GM10248 (cell line): ENCODE measurements at regions of chr14 and their contacts with region 1.

Region 1: DNA sequence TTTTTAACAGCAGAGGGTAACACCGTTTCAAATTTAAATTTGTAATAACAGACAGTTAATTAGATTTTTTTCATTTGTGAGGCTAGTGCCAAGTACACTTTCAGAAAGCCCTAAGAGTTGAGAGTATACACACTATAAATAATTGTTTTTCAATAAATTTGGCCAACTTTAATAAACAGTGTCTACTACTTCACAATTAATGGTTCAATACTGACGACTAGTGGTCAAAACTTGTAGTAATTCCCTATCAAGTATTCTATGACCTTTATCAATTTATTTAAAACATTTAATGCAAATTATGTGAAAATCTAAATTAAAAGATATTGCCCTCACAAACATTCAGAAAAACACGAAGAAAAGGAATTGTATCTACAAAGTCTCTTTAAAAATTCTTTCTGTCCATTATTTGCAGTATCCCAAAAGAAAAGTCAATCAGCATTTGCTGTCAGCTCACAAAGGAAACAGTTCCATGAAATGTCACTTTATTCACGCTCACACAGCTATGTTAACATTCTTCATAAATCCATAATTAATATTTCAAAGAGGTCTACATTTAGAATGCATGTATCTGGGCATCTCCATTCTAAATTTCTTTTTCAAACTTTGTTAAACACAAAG is 91.2 kb downstream of the CEP128 start:
- DNase-seq: peak; percentile 7
- CTCF ChIP-seq: peak; percentile 48

Region 2: GRCh38 chr14:78959674-78960264 is 1890.5 kb before region 1 on chr14:
- CTCF ChIA-PET with region 1: interaction called, 15 read pairs
- POLR2A ChIA-PET with region 1: no interaction called
- DNase-seq: peak; percentile 53
- CTCF ChIP-seq: peak; percentile 89

Region 3: GRCh38 chr14:78967110-78967809 is 1883.0 kb before region 1 on chr14:
- CTCF ChIA-PET with region 1: interaction called, 13 read pairs
- POLR2A ChIA-PET with region 1: no interaction called
- DNase-seq: no peak
- CTCF ChIP-seq: no peak

Region 4: DNA sequence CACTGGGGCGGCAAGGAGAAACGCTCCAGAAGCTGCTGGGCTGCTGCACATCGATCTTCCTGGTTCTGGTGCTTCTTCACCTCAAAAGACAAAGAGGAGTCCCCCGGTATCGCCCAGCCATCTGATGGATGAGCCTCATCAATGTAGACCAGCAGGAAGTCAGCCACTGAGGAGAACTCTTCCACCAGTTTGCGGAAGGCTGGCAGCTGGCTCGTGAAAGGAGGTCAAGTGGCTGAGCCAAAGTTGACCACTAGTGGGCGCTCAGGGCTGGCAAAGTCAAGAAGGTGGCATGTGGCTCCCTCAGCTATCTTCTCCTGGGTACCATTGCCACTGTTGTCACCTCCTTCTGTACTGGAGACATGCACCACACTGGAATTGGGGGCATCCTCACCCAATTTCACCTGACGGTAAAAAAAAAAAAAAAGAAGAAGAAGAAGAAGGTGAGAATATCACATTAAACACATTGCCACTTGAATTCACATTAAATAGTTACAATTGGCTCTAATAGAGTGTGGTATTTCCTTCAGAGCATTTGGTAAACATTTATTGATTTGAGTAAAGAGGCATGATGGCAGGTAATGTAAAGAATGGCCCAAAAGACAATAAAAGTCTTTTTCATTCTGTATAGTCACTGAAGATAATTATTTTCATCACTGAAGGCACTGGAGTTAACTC is 647.3 kb before region 1 on chr14:
- CTCF ChIA-PET with region 1: interaction called, 13 read pairs
- POLR2A ChIA-PET with region 1: no interaction called
- DNase-seq: peak; percentile 18
- CTCF ChIP-seq: peak; percentile 34

Region 5: DNA sequence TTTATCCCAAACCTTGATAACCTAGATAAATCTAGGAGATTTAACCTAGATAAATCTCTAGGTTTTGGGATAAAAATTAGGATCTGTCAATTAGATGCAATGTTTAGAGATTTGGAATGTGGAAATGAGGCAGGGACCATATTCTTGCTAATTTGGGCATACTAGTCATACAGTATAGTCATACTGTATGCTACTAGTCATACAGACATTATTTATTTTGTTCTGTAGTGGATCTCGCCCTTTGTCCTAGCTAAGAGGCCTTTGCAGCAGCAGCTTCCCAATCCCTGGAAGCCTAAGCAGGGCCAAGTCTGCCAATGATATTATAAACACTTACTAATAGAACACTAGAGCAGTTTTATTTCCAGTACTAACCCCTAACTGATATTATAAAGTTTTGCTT is 45.2 kb before region 1 on chr14:
- CTCF ChIA-PET with region 1: no interaction called
- POLR2A ChIA-PET with region 1: no interaction called
- DNase-seq: no peak
- CTCF ChIP-seq: no peak

Region 6: DNA sequence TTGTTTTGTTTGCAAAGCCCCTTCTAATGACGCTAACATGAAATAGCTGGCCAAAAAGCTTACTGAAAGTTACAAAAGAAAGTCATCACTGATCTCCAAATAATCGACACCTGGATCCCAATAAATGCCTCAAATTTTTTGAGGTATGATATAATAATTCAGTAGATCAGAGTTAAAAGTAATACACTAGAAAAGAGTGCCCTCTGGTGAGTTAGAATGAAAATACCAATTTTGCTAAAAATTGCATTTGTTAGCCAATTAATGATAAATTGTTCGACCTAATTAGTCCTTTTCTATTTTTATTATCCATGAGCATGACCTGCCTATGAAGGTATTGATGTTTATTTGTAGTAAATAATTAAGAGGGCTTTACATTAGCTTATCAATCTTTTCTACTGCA is 12.7 kb after region 1 on chr14:
- CTCF ChIA-PET with region 1: interaction called, 15 read pairs
- POLR2A ChIA-PET with region 1: no interaction called
- DNase-seq: no peak
- CTCF ChIP-seq: no peak